GM10248 (cell line): ENCODE measurements at regions of chr17 and their contacts with region 1.

Region 1: DNA sequence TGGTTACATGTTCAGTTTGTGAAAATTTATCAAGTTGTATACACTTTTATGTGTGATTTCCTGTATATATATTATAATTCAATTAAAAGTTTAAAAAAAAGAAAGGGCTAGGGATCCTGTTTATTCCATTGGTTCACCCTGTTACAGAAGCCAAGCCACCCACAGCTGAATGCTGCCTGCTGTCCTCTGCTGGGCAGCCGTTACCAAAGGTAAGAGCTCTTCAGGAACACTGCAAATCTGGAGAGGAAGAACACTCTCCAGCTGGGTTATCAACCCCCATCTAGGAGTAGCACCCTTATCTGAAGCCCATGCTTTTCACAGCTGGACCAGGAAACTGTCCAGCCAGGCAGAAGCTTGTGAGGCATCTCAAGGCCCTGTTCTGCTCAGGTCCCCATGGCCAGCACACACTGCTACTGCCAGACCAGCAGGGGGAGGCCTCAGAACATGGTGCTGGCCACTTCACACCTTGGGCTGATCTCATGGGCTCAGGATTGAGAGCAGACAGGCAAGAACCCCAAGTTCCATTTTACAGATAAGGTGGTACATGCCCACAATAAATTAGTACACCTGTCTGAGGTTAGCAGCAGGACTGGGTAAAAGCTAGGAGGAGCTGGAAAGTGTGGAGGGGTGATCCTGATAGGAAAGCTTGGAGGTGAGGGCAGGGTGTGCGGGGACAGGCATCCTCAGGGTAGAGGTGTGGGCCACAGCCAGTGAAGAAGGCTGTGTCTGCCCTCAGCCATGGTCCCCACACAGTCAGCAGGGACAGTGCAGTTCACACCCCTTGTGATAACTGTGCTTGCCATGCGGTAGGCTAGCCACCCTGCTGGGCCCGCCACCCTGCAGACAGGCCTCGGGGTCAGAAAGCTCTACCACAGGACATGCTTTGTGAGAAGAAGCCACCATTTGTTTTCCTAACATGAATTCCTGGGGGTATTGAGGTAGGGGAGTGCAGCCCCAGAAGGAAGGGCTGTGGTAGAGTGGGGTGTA is 54.3 kb upstream of the SREBF1 start:
- DNase-seq: peak; percentile 82
- CTCF ChIP-seq: peak; percentile 85

Region 2: GRCh38 chr17:17877529-17878358 is 13.3 kb before region 1 on chr17:
- CTCF ChIA-PET with region 1: interaction called, 15 read pairs
- POLR2A ChIA-PET with region 1: no interaction called
- DNase-seq: no peak
- CTCF ChIP-seq: no peak

Region 3: GRCh38 chr17:18025945-18026776 is 135.1 kb after region 1 on chr17:
- CTCF ChIA-PET with region 1: interaction called, 19 read pairs
- POLR2A ChIA-PET with region 1: no interaction called
- DNase-seq: no peak
- CTCF ChIP-seq: no peak

Region 4: GRCh38 chr17:18033442-18034099 is 142.5 kb after region 1 on chr17:
- CTCF ChIA-PET with region 1: interaction called, 50 read pairs
- POLR2A ChIA-PET with region 1: no interaction called
- DNase-seq: peak; percentile 80
- CTCF ChIP-seq: peak; percentile 63

Region 5: GRCh38 chr17:18102640-18103039 is 211.6 kb after region 1 on chr17:
- CTCF ChIA-PET with region 1: no interaction called
- POLR2A ChIA-PET with region 1: no interaction called
- DNase-seq: no peak
- CTCF ChIP-seq: no peak